SK-N-SH (cell line): ENCODE measurements at regions of chr20 and their contacts with region 1.

Region 1: GRCh38 chr20:2523919-2524708 is 12.3 kb upstream of the TMC2 start:
- DNase-seq: peak; percentile 87
- H3K4me3 ChIP-seq: peak overlapping the region; percentile 55 to 91
- H3K27ac ChIP-seq: peak overlapping the region; percentile 62 to 73; a peak in 3 of 4 replicates
- H3K4me1 ChIP-seq: peaks cover 5% of the 10 kb centered on the region in 2 experiments; a peak in 1 of 4 replicates
- H3K27me3 ChIP-seq: no peaks in the 10 kb centered on the region
- CTCF ChIP-seq: peak; percentile 97
- EP300 ChIP-seq: no peak
- RAD21 ChIP-seq: peak; percentile 61

Region 2: GRCh38 chr20:2387180-2387577 is 136.9 kb before region 1 on chr20:
- CTCF ChIA-PET with region 1: no interaction called
- POLR2A ChIA-PET with region 1: no interaction called
- DNase-seq: peak; percentile 44
- H3K4me3 ChIP-seq: peak overlapping the region in 1 of 2 experiments; percentile 20; a peak in 1 of 4 replicates
- H3K27ac ChIP-seq: peak overlapping the region in 1 of 2 experiments; percentile 86; a peak in 2 of 4 replicates
- H3K4me1 ChIP-seq: peaks cover 0 to 31% of the 10 kb centered on the region in 2 experiments; a peak in 2 of 4 replicates
- H3K27me3 ChIP-seq: no peaks in the 10 kb centered on the region
- CTCF ChIP-seq: peak; percentile 65
- EP300 ChIP-seq: no peak
- RAD21 ChIP-seq: peak; percentile 23; the same call in 1 of the 2 replicates

Region 3: GRCh38 chr20:2397595-2398145 is 126.4 kb before region 1 on chr20:
- CTCF ChIA-PET with region 1: no interaction called
- POLR2A ChIA-PET with region 1: no interaction called
- DNase-seq: no peak
- H3K4me3 ChIP-seq: no peak overlapping the region
- H3K27ac ChIP-seq: no peak overlapping the region
- H3K4me1 ChIP-seq: no peaks in the 10 kb centered on the region
- H3K27me3 ChIP-seq: no peaks in the 10 kb centered on the region
- CTCF ChIP-seq: peak; percentile 22; the same call in 1 of the 2 replicates
- EP300 ChIP-seq: no peak
- RAD21 ChIP-seq: no peak

Region 4: DNA sequence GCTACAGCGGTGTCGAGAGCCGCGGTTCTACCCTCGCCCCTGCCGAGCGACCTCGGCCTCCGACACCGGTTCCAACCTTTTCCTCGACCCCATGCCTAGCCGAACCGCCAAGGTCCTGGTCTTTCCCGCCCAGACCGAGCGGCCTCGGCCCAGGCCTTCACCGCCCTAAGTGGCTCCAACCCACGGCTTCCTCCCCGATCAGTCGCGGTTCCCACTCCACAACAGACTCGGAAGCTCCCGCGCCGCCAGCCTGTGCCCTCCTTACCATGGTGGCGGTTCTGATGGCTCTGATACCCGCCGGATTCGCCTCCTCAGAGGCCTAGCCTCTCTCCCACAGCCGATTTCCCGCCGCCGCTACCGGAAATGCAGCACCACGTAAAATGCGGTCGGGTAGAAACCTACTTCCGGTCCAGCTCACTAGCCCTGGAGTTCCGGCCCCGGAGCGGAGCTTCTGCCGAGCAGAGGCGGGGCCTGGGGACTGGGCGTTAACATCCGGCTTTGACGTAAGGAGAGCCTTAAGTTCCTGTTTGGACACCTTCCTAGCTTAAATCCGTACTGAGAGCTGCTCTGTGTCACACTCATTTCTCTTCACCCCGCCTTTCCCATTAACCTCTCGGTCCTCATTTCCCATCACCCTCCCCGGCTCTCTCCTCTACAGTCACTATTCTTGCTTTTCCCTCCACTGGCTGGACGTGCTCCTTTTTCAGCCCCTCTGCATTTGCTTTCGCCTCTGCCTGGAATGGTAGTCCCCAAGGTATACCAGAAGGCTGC is 53.5 kb before region 1 on chr20 and contains the start of gene SNRPB:
- CTCF ChIA-PET with region 1: interaction called, 10 read pairs
- POLR2A ChIA-PET with region 1: no interaction called
- DNase-seq: peak; percentile 92
- H3K4me3 ChIP-seq: peak within 1 kb of the TSS; percentile 86 to 89
- H3K27ac ChIP-seq: peak within 1 kb of the TSS; percentile 86 to 96
- H3K4me1 ChIP-seq: peaks cover 15 to 21% of the 10 kb centered on the region in 2 experiments
- H3K27me3 ChIP-seq: no peaks in the 10 kb centered on the region
- CTCF ChIP-seq: no peak
- EP300 ChIP-seq: peak in 1 of 2 experiments; percentile 51; a peak in 1 of 4 replicates
- RAD21 ChIP-seq: peak; percentile 4; the same call in 1 of the 2 replicates
- polyA plus RNA-seq, gene SNRPB: 380 and 455 TPM in 2 replicates

Region 5: DNA sequence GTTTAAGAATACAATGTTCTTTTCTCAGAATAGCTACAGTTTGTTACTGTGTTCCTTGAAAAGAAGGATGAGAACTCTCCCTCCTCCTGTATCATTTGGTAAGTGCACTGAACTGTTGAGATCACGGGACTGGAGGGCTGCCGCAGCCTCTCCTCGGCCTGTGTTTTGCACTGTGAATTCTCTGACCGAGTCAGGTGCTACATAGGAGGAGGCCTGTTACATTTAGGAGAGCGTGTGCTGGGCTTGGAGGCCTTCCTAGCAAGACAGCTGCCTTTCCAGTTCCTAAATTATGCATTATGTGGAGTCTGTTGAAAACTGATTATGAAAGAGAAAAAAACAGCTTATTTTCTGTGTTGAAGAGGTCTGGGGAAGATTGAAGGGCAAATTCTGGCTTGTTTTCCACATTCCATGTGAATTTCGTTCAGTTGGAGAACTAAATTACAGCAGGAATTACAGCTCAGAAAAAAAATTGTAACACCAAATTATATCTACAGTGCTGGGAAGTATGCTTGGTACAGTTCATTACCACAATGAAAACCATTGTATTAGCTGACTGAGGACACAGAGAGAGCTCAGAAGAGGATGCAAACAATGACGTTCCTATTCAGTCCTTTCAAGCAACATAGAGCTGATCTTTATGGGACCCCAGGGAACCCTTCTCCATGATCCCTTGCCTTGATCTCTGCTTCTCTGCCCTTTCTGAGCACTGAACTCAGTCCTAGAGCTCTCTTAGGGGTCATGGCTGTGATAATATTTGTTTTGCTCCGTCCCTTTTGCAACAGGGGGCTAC is 15.0 kb after region 1 on chr20:
- CTCF ChIA-PET with region 1: interaction called, 16 read pairs
- POLR2A ChIA-PET with region 1: interaction called, 3 read pairs
- DNase-seq: no peak
- H3K4me3 ChIP-seq: no peak overlapping the region
- H3K27ac ChIP-seq: no peak overlapping the region
- H3K4me1 ChIP-seq: no peaks in the 10 kb centered on the region
- H3K27me3 ChIP-seq: peaks cover 13% of the 10 kb centered on the region; the same call in 1 of the 2 replicates
- CTCF ChIP-seq: no peak
- EP300 ChIP-seq: no peak
- RAD21 ChIP-seq: no peak

Region 6: DNA sequence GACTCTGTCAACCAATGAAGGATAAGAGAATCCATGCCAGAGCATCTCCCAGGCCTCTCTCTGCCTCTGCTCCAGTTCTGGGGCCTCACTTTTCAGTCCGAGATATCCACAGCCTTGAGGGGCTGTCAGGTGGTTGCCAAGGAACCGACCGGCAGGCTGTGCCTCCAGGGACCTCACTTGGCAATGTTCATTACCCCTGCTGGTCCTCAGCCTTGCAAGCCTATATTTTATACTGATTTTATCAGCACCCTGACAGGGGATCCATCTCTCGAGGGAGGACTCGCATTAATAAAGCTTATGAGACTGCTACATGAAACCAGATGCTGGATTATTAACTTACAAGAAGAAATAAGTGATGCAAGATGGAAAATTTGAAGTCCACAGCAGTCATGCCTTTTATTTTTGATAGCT is 52.2 kb after region 1 on chr20:
- CTCF ChIA-PET with region 1: interaction called, 17 read pairs
- POLR2A ChIA-PET with region 1: no interaction called
- DNase-seq: peak; percentile 74
- H3K4me3 ChIP-seq: no peak overlapping the region
- H3K27ac ChIP-seq: peak overlapping the region in 1 of 2 experiments; percentile 51; a peak in 2 of 4 replicates
- H3K4me1 ChIP-seq: peaks cover 0 to 14% of the 10 kb centered on the region in 2 experiments; a peak in 2 of 4 replicates
- H3K27me3 ChIP-seq: peaks cover 4% of the 10 kb centered on the region; the same call in 1 of the 2 replicates
- CTCF ChIP-seq: no peak
- EP300 ChIP-seq: peak in 1 of 2 experiments; percentile 80; a peak in 2 of 4 replicates
- RAD21 ChIP-seq: peak; percentile 14; the same call in 1 of the 2 replicates

Region 7: GRCh38 chr20:2643708-2644107 is 119.6 kb after region 1 on chr20:
- CTCF ChIA-PET with region 1: interaction called, 133 read pairs
- POLR2A ChIA-PET with region 1: no interaction called
- DNase-seq: no peak
- H3K4me3 ChIP-seq: no peak overlapping the region
- H3K27ac ChIP-seq: no peak overlapping the region
- H3K4me1 ChIP-seq: no peaks in the 10 kb centered on the region
- H3K27me3 ChIP-seq: no peaks in the 10 kb centered on the region
- CTCF ChIP-seq: no peak
- EP300 ChIP-seq: no peak
- RAD21 ChIP-seq: no peak